BJ (cell line): ENCODE measurements at regions of chr2 and their contacts with region 1.

Region 1: GRCh38 chr2:88880441-88880953 is 189.0 kb downstream of the RPIA start:
- DNase-seq: no peak
- H3K4me3 ChIP-seq: no peak overlapping the region
- H3K27me3 ChIP-seq: no peaks in the 10 kb centered on the region
- CTCF ChIP-seq: peak; percentile 82

Region 2: GRCh38 chr2:88691339-88692183 is 188.9 kb before region 1 on chr2 and contains the start of gene RPIA:
- CTCF ChIA-PET with region 1: no interaction called
- POLR2A ChIA-PET with region 1: no interaction called
- DNase-seq: peak; percentile 92
- H3K4me3 ChIP-seq: peak within 1 kb of the TSS; percentile 97
- H3K27me3 ChIP-seq: no peaks in the 10 kb centered on the region
- CTCF ChIP-seq: peak; percentile 56
- polyA plus RNA-seq, gene RPIA: 6.4 and 8.0 TPM in 2 replicates

Region 3: DNA sequence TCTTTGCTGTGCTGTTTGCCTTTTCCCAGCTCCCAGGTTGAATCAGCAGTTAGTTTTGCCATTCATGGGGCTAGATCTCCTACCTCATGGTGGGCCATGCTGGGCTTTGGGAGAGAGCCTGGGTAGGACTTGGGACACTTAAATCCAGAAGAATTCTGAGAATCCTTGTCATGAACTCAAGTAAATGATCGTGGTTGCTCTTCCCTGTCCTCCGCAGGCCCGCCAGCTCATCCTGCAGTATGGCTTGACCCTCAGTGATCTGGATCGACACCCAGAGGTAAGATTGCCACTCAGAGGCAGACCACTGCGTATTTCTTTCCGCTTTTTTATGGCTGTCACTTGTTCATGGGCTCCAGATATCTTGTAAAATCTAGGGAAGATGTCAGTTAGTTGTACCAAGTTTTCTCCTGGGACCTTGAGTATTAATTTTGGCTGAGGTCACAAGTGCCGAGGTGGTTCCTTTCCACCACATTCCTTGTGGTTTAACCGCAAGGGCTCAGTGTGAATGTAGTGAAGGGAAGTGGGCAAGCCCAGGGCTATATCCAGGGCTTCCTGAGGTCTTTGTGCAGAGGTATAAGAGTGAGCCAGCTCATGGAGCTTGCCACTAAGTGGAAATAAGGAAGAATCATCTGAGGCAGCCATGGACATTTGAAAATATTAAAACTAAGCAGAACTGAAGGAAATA is 151.3 kb before region 1 on chr2:
- CTCF ChIA-PET with region 1: no interaction called
- POLR2A ChIA-PET with region 1: no interaction called
- DNase-seq: peak; percentile 6
- H3K4me3 ChIP-seq: no peak overlapping the region
- H3K27me3 ChIP-seq: no peaks in the 10 kb centered on the region
- CTCF ChIP-seq: no peak

Region 4: GRCh38 chr2:88831792-88832248 is 48.7 kb before region 1 on chr2:
- CTCF ChIA-PET with region 1: no interaction called
- POLR2A ChIA-PET with region 1: no interaction called
- DNase-seq: no peak
- H3K4me3 ChIP-seq: no peak overlapping the region
- H3K27me3 ChIP-seq: no peaks in the 10 kb centered on the region; the same call in 1 of the 2 replicates
- CTCF ChIP-seq: peak; percentile 61

Region 5: DNA sequence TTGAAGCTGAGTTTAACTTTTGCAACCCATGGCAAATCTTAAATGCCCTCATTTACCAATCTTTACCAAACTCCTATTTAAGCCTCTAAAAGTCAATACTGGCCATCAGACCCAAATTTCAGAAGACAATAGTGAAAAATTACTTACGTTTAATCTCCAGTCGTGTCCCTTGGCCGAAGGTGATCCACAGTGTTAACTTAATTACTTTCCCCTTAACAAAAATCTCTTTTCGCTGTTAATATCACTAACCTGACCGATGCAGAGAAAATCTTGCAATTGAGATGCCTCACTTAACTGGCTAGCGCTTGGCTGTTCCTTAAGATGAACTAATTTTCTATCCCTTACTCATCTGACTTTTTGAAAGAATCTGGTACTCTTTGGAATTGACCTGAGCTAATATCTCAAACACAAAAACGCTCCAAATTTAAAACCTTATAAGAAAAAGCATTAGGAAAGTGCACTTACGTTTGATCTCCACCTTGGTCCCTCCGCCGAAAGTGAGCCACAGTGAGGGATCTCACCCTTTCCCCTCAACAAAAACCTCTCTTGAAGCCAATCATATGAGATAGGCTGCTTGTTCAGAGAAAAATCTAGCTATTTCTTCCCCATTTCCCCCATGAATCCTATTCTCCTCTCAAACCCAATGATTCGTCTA is 19.9 kb before region 1 on chr2:
- CTCF ChIA-PET with region 1: interaction called, 10 read pairs
- POLR2A ChIA-PET with region 1: no interaction called
- DNase-seq: no peak
- H3K4me3 ChIP-seq: no peak overlapping the region
- H3K27me3 ChIP-seq: no peaks in the 10 kb centered on the region
- CTCF ChIP-seq: no peak

Region 6: DNA sequence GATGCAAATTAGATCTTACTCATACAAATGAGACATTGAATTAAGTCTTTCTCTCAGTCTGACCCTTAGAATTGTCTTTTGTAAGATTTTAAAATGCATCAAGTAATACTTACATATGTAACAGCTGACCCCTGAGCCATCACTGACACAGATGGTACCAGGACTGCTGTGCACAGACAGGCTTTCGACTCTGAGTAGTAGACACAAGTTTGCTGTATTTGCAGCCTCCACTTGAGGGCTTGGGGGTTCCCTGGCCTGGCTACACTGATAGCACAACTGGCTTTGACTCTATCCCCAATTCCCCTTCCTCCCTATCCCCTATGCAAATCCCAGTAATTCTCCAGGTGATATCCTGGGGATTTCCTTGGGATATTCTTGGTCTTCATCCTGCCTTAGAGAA is 11.7 kb after region 1 on chr2:
- CTCF ChIA-PET with region 1: interaction called, 17 read pairs
- POLR2A ChIA-PET with region 1: no interaction called
- DNase-seq: no peak
- H3K4me3 ChIP-seq: no peak overlapping the region
- H3K27me3 ChIP-seq: no peaks in the 10 kb centered on the region
- CTCF ChIP-seq: no peak

Region 7: GRCh38 chr2:88919087-88919738 is 38.7 kb after region 1 on chr2:
- CTCF ChIA-PET with region 1: interaction called, 10 read pairs
- POLR2A ChIA-PET with region 1: no interaction called
- DNase-seq: no peak
- H3K4me3 ChIP-seq: no peak overlapping the region
- H3K27me3 ChIP-seq: no peaks in the 10 kb centered on the region
- CTCF ChIP-seq: peak; percentile 79

Region 8: GRCh38 chr2:88967844-88968243 is 87.3 kb after region 1 on chr2:
- CTCF ChIA-PET with region 1: no interaction called
- POLR2A ChIA-PET with region 1: no interaction called
- DNase-seq: no peak
- H3K4me3 ChIP-seq: no peak overlapping the region
- H3K27me3 ChIP-seq: no peaks in the 10 kb centered on the region; the same call in 1 of the 2 replicates
- CTCF ChIP-seq: peak; percentile 30; the same call in 1 of the 2 replicates